ENCODE measurements at regions of chr11 and their contacts with region 1.

Region 1: GRCh38 chr11:925496-926321 is at the start of gene AP2A2:
- DNase-seq: peak; percentile 87
- H3K4me3 ChIP-seq: peak within 1 kb of the TSS; percentile 32 to 73 (median 67)
- H3K27ac ChIP-seq: peak within 1 kb of the TSS; percentile 67
- H3K4me1 ChIP-seq: peaks cover 18% of the 10 kb centered on the region
- H3K27me3 ChIP-seq: no peaks in the 10 kb centered on the region
- CTCF ChIP-seq: peak; percentile 72 to 77
- POLR2A ChIP-seq: peak; percentile 78
- total RNA-seq, gene AP2A2: 92.5 and 92.6 TPM in 2 replicates

Region 2: GRCh38 chr11:910589-911195 is 15.0 kb before region 1 on chr11 and contains the start of gene CHID1:
- CTCF ChIA-PET with region 1: interaction called, 9 read pairs
- POLR2A ChIA-PET with region 1: no interaction called
- dilution Hi-C with region 1: no loop called
- intact Hi-C with region 1: loop called (anchors 2 kb)
- DNase-seq: peak; percentile 81
- H3K4me3 ChIP-seq: peak within 1 kb of the TSS; percentile 74 to 96 (median 81)
- H3K27ac ChIP-seq: peak within 1 kb of the TSS; percentile 53
- H3K4me1 ChIP-seq: peaks cover 8% of the 10 kb centered on the region
- H3K27me3 ChIP-seq: no peaks in the 10 kb centered on the region
- CTCF ChIP-seq: no peak
- POLR2A ChIP-seq: peak; percentile 84
- total RNA-seq, gene CHID1: 86.2 and 89.8 TPM in 2 replicates

Region 3: GRCh38 chr11:1181867-1182535 is 256.3 kb after region 1 on chr11:
- CTCF ChIA-PET with region 1: no interaction called
- POLR2A ChIA-PET with region 1: no interaction called
- dilution Hi-C with region 1: no loop called
- intact Hi-C with region 1: no loop called
- DNase-seq: no peak
- H3K4me3 ChIP-seq: no peak overlapping the region
- H3K27ac ChIP-seq: no peak overlapping the region
- H3K4me1 ChIP-seq: no peaks in the 10 kb centered on the region
- H3K27me3 ChIP-seq: no peaks in the 10 kb centered on the region
- CTCF ChIP-seq: no peak
- POLR2A ChIP-seq: no peak

Measured in endothelial cell of umbilical vein (primary cell).